Right cardiac atrium (tissue), 5 donors: ENCODE measurements at regions of chr5 and their contacts with region 1.

Region 1: DNA sequence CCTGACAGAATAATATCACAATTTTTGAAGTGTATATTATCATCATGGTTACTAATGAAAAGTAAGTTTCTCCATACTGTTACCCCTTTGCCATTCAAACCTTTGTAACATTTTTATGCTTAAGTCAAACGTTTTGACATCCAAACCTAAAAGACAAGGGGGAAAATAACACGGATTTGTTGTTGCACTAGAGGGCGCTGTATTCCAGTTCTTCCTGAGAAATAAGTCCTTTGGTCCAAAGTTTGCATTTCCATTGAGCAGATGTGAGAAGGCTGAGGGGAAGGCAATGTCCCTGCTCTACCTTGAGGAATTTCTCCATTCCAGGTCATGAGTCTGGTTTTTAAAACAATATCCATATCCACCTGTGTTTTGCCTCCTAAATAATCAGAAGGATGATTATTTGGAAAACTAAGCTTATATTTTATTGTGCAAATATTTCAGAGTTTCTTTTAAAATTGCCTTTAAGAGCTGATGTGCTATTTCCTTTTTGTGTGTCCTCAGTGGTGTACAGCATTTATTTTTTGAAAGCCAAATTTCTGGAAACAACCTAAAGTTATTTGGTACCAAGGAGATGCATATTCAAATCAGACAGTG is 9.7 kb downstream of the LECT2 start:
- DNase-seq: peak in 1 of 3 donors; percentile 17
- ATAC-seq: peak; percentile 26 to 54
- H3K4me3 ChIP-seq: no peak overlapping the region
- H3K27ac ChIP-seq: no peak overlapping the region
- H3K4me1 ChIP-seq: no peaks in the 10 kb centered on the region
- H3K27me3 ChIP-seq: no peaks in the 10 kb centered on the region

Region 2: DNA sequence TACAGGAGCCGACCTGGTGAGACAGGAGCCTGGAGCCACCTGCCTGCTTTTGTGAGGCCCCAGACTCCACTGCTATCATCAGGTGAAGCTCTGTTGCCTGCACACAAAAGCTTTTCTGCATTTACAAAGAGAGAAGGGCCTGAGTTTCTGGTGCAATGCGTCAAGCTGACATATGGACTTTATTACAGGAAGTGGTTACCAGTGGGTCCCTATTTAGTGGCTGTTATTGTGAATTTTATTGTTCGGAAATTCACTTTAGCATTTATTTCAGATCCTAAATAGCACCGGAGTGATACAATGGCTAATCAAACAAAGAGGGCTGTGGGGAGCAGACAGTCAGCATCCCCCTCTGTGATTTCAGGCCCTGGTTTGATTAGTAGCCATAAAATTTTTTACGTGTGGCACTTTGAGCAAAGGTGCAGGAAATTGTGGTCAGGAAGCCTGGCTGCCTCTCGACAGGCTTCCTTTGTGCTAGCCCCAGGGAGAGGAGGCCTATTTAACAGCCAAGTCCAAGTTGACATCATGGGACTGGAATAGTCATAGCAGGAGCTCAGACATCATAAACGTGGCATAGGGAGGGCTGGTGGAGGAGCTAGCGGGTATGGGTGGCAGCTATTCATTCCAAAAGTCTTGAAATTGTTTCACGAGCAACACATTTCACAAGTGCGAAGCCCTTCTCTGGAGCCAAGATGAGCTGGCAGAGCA is 92.1 kb after region 1 on chr5:
- intact Hi-C with region 1: no loop called
- DNase-seq: peak in 1 of 3 donors; percentile 56
- ATAC-seq: peak; percentile 78 to 80
- H3K4me3 ChIP-seq: no peak overlapping the region
- H3K27ac ChIP-seq: peak overlapping the region; percentile 86
- H3K4me1 ChIP-seq: peaks cover 13% of the 10 kb centered on the region
- H3K27me3 ChIP-seq: no peaks in the 10 kb centered on the region

Region 3: GRCh38 chr5:136062366-136063274 is 117.6 kb after region 1 on chr5:
- intact Hi-C with region 1: loop called in 2 of 4 experiments (anchors 10 kb)
- DNase-seq: no peak
- ATAC-seq: no peak
- H3K4me3 ChIP-seq: no peak overlapping the region
- H3K27ac ChIP-seq: no peak overlapping the region
- H3K4me1 ChIP-seq: peaks cover 5% of the 10 kb centered on the region
- H3K27me3 ChIP-seq: no peaks in the 10 kb centered on the region

Region 4: GRCh38 chr5:136080483-136081216 is 135.6 kb after region 1 on chr5:
- intact Hi-C with region 1: loop called in 3 of 4 experiments (anchors 5 to 10 kb)
- DNase-seq: peak; percentile 89 to 97 (median 95)
- ATAC-seq: peak; percentile 97 to 98
- H3K4me3 ChIP-seq: peak overlapping the region; percentile 13
- H3K27ac ChIP-seq: peak overlapping the region; percentile 13
- H3K4me1 ChIP-seq: no peaks in the 10 kb centered on the region
- H3K27me3 ChIP-seq: no peaks in the 10 kb centered on the region

Region 5: DNA sequence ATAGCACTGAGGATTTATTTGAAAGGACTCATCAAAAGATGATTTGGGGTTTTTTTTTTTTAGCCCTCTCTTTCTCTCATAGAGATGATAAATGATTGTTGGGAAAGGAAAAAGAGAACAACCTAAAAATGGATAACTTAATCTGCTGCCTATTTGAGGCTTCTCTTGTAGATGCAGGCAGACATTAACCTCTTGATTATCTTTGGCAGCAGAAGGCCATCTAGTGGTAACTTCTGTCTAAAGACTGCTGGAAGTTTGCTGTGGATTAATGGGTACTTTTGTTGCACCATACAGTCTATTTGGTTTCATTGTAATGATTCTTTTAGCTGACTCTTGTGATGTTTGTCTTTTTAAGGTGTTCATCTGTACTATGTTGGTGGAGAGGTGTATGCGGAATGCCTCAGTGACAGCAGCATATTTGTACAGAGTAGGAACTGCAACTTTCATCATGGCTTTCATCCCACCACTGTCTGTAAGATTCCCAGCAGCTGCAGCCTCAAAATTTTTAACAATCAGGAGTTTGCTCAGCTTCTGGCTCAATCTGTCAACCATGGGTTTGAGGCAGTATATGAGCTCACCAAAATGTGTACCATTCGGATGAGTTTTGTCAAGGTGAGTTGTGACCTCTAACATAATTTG is 229.1 kb after region 1 on chr5:
- intact Hi-C with region 1: loop called in 2 of 4 experiments (anchors 5 to 10 kb)
- DNase-seq: no peak
- ATAC-seq: peak in 1 of 2 donors; percentile 62
- H3K4me3 ChIP-seq: no peak overlapping the region
- H3K27ac ChIP-seq: no peak overlapping the region
- H3K4me1 ChIP-seq: no peaks in the 10 kb centered on the region
- H3K27me3 ChIP-seq: no peaks in the 10 kb centered on the region

Region 6: DNA sequence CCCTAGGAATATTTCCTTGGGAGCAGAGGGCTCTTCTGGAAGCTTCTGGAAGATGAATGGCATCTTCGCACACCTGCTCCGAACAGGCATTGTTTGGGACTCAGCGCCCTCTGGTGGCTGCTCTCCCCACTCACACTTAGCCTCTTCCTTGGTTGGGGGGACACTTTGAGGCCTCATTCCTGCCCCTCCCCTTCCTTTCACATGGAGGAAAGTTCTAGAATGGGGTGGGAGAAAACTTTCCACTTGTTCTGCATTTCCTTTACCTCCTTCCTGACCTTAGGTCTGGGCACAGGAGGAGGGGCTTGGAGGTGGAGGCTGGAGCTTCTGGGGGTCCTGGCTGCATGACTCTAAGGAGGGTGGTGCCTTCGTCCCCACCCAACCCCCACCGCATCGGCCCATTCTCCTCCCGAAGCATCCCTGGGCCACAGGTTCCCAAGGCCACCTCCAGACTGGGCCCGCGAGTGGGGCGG is 267.2 kb after region 1 on chr5:
- intact Hi-C with region 1: loop called in 1 of 4 experiments (anchors 5 kb)
- DNase-seq: peak; percentile 47 to 77 (median 76)
- ATAC-seq: peak; percentile 20 to 48
- H3K4me3 ChIP-seq: no peak overlapping the region
- H3K27ac ChIP-seq: no peak overlapping the region
- H3K4me1 ChIP-seq: no peaks in the 10 kb centered on the region
- H3K27me3 ChIP-seq: no peaks in the 10 kb centered on the region

Region 7: DNA sequence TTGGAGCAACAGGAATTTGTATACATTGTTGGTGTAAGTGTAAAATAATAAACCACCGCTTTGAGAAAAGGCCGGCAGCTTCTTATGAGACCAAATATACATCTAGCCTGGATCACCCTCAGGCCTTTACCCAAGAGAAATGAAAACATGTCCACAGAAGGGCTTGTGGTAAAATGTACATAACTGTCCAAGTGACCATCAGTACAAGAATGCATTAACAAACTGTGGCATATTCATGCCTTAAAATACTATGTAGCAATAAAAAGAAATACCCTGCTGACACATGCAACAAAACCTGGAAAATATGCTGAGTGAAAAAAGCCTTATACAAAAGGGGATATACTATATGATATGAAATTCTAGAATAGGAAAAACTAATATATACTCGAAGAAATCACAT is 732.2 kb after region 1 on chr5:
- intact Hi-C with region 1: no loop called
- DNase-seq: no peak
- ATAC-seq: no peak
- H3K4me3 ChIP-seq: no peak overlapping the region
- H3K27ac ChIP-seq: no peak overlapping the region
- H3K4me1 ChIP-seq: no peaks in the 10 kb centered on the region
- H3K27me3 ChIP-seq: no peaks in the 10 kb centered on the region